ENCODE measurements at regions of chr3 and their contacts with region 1.

Region 1: GRCh38 chr3:58008140-58009025 is at the start of gene FLNB:
- DNase-seq: no peak
- H3K4me3 ChIP-seq: peak within 1 kb of the TSS; percentile 100
- CTCF ChIP-seq: peak; percentile 92

Region 2: DNA sequence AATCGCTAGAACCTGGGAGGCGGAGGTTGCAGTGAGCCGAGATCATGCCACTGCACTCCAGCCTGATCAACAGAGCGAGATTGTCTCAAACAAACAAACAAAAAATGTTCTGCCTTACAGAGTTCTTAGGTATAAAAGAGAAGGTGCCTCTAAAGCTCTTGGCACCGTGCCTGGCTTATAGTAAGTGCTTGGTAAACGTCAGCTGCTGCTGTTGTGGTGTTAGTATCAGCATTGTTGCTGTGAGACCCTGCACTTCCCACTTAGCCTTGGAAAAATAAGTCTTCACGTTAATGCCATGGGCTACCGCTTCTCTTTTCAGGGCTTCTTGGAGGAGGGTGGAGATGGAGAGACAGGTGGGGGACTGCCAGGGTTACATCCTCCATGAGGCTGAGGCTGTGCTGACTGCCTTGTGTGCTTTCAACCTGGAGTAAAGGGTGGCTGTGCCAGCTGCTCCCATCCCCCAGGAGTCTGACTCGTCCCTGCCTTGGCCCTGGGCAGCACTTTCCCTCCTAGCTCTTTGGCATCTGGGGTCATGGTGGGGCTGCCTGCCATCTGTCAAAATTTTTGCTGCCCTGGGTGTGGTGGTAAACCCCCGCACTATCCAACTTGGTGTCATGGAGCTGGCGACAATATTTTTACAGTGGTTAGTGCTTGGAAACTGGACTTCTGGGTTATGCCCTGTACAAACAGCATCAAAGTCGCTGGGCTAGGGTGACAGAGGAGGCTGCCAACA is 17.6 kb after region 1 on chr3:
- CTCF ChIA-PET with region 1: interaction called, 11 read pairs
- POLR2A ChIA-PET with region 1: no interaction called
- DNase-seq: no peak
- H3K4me3 ChIP-seq: no peak overlapping the region
- CTCF ChIP-seq: no peak

Region 3: GRCh38 chr3:58101499-58102389 is 93.4 kb after region 1 on chr3:
- CTCF ChIA-PET with region 1: interaction called, 10 read pairs
- POLR2A ChIA-PET with region 1: no interaction called
- DNase-seq: no peak
- H3K4me3 ChIP-seq: no peak overlapping the region
- CTCF ChIP-seq: no peak

Region 4: GRCh38 chr3:58129041-58129770 is 120.8 kb after region 1 on chr3:
- CTCF ChIA-PET with region 1: interaction called, 18 read pairs
- POLR2A ChIA-PET with region 1: no interaction called
- DNase-seq: no peak
- H3K4me3 ChIP-seq: no peak overlapping the region
- CTCF ChIP-seq: no peak